ENCODE measurements at regions of chr4 and their contacts with region 1.

Region 1: DNA sequence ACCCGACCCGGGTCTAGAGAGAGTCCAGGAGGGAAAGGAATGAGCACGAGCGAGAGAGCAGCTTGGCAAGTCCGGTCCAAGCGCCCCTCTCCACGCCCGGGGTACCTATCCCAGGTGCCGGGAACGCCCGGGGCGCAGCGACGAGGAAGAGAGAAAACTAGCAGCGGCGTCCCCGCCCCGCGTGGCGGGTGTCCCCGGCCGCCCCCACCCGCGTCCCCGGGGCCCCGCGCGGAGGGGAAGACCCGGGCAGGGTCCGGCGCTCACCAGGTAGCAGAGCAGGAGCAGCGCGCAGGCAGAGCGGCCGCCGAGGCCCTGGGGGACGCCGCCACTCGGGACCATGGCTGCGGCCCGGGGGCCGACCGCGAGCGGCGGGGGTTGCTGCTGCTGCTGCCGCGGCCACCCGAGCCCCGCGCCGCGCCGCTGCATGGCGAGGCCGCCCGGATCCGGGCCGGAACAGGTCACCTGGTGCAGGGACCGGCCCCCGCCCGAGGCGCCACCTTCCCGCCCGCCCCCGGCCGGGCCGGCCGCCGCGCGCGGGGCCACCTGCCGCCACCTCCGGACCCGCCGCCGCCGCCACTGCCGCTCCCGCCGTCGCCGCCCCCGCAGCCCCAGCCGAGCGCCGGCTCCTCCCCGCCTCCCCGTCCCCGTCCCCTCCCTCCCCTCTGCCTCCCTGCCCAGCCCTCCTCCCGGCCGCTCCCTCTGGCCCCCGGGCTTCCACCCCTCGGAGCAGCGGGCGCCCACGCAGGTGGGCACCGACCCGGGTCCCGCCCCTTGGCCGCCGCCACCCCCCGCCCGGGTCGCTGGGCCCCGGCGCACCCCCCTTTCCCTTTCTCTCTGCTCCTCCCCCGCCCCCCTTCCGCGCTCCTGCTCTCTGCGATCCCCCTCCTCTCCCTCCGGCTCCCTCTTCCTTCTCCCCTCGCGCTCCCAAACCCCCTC is at the start of gene SEL1L3:
- DNase-seq: peak; percentile 79
- ATAC-seq: peak; percentile 33
- H3K4me3 Mint-ChIP-seq: peak within 1 kb of the TSS; percentile 94
- H3K27ac Mint-ChIP-seq: peak within 1 kb of the TSS; percentile 96
- H3K4me1 Mint-ChIP-seq: peaks cover 40% of the 10 kb centered on the region
- H3K27me3 Mint-ChIP-seq: no peaks in the 10 kb centered on the region
- total RNA-seq, gene SEL1L3: 31.9 to 34.8 TPM

Region 2: DNA sequence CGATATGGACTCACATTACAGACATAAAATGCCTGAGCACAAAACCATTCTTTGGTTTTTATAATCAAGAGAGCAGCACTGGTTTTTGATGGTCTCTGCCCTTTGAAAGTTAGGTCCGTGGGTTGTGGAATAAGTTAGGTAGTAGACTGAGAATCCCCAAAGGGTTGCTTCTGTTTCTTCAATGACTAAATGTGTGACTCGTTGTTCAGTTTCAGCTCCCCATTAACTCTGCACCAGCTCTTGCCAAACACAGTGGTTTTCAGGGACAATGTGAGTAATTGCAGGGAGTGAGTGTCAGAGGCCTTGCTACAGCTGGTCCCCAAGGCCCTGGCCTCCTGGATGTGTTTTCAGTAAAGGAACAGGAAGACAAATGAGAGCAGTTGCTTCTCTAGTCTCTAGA is 76.1 kb after region 1 on chr4:
- CTCF ChIA-PET with region 1: interaction called, 5 read pairs
- POLR2A ChIA-PET with region 1: no interaction called
- intact Hi-C with region 1: loop called in 1 of 2 experiments (anchors 2 kb)
- DNase-seq: peak; percentile 76
- ATAC-seq: peak; percentile 97
- H3K4me3 Mint-ChIP-seq: peak overlapping the region; percentile 5
- H3K27ac Mint-ChIP-seq: peak overlapping the region; percentile 72
- H3K4me1 Mint-ChIP-seq: peaks cover 22% of the 10 kb centered on the region
- H3K27me3 Mint-ChIP-seq: peaks cover 18% of the 10 kb centered on the region

Region 3: GRCh38 chr4:26583865-26584652 is 721.4 kb after region 1 on chr4 and contains the start of gene TBC1D19:
- CTCF ChIA-PET with region 1: no interaction called
- POLR2A ChIA-PET with region 1: no interaction called
- intact Hi-C with region 1: loop called in 1 of 2 experiments (anchors 2 kb)
- DNase-seq: peak; percentile 93
- ATAC-seq: peak; percentile 96
- H3K4me3 Mint-ChIP-seq: peak within 1 kb of the TSS; percentile 93
- H3K27ac Mint-ChIP-seq: peak within 1 kb of the TSS; percentile 92
- H3K4me1 Mint-ChIP-seq: peaks cover 24% of the 10 kb centered on the region
- H3K27me3 Mint-ChIP-seq: peaks cover 1% of the 10 kb centered on the region
- total RNA-seq, gene TBC1D19: 5.0 to 5.3 TPM